ENCODE measurements at regions of chr5 and their contacts with region 1.

Region 1: GRCh38 chr5:125499636-125500332 is 753.3 kb upstream of the ZNF608 start:
- DNase-seq: peak in 10 of 42 donors; percentile 17 to 70 (median 43)

Region 2: GRCh38 chr5:125575891-125576505 is 76.2 kb after region 1 on chr5:
- intact Hi-C with region 1: loop called (anchors 10 kb)
- DNase-seq: peak; percentile 23 to 84 (median 64)

Region 3: GRCh38 chr5:126776497-126777256 is 1276.9 kb after region 1 on chr5 and contains the start of gene LMNB1:
- intact Hi-C with region 1: no loop called
- DNase-seq: peak; percentile 73 to 97 (median 93)

Measured in head of caudate nucleus (tissue), 42 donors.